Activated CD4-positive, alpha-beta memory T cell treated with anti-CD3 and anti-CD28 coated beads for 36 hours (primary cell): ENCODE measurements at regions of chr2 and their contacts with region 1.

Region 1: GRCh38 chr2:203928849-203929248 is 7.7 kb upstream of the ICOS start:
- DNase-seq: no peak
- H3K4me3 Mint-ChIP-seq: no peak overlapping the region
- H3K27ac Mint-ChIP-seq: no peak overlapping the region
- H3K4me1 Mint-ChIP-seq: peaks cover 42% of the 10 kb centered on the region
- H3K27me3 Mint-ChIP-seq: peaks cover 2% of the 10 kb centered on the region

Region 2: GRCh38 chr2:203918264-203918663 is 10.6 kb before region 1 on chr2:
- CTCF ChIA-PET with region 1: interaction called, 26 read pairs
- POLR2A ChIA-PET with region 1: no interaction called
- intact Hi-C with region 1: no loop called
- DNase-seq: no peak
- H3K4me3 Mint-ChIP-seq: no peak overlapping the region
- H3K27ac Mint-ChIP-seq: no peak overlapping the region
- H3K4me1 Mint-ChIP-seq: peaks cover 39% of the 10 kb centered on the region
- H3K27me3 Mint-ChIP-seq: peaks cover 3% of the 10 kb centered on the region